ENCODE measurements at regions of chr1 and their contacts with region 1.

Region 1: DNA sequence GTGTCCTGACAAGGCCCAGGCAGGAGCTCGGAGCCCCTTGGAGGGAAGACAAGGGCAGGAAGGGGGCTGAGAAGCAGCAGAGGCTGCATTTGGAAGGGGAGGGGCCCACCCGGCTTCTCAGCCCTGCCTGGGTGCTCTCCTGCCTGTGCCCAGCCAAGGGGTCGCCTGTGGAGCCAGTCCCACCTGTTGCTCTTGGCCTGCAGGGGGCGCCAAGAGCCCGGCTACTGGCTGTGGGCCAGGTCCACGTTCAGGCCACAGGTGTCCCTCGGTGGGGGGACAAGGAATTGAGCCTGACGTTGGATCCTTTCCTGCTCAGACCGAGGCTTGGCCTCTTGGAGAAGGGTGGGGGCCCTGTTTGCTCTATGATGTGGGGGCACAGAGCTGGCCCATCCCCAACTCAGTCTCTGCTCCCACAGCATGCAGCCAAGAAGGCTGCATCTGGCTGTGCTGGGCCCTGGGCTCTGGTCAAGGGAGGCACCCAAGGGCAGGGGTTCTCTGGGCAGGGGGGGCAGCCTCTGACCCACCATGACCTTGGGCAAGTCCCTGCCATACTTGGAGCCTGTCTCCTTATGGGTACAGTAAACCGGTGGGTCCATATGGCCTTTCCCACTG is 10.9 kb downstream of the WNT4 start:
- DNase-seq: no peak
- ATAC-seq: peak in 2 of 4 donors; percentile 34 to 53
- H3K4me3 ChIP-seq: no peak overlapping the region
- H3K27ac ChIP-seq: no peak overlapping the region
- H3K4me1 ChIP-seq: peaks cover 0 to 4% (median 0%) of the 10 kb centered on the region in 12 donors
- H3K27me3 ChIP-seq: peaks cover 0 to 33% (median 1%) of the 10 kb centered on the region in 9 donors
- CTCF ChIP-seq: peak; percentile 35 to 69 (median 62)
- POLR2A ChIP-seq: no peak

Region 2: DNA sequence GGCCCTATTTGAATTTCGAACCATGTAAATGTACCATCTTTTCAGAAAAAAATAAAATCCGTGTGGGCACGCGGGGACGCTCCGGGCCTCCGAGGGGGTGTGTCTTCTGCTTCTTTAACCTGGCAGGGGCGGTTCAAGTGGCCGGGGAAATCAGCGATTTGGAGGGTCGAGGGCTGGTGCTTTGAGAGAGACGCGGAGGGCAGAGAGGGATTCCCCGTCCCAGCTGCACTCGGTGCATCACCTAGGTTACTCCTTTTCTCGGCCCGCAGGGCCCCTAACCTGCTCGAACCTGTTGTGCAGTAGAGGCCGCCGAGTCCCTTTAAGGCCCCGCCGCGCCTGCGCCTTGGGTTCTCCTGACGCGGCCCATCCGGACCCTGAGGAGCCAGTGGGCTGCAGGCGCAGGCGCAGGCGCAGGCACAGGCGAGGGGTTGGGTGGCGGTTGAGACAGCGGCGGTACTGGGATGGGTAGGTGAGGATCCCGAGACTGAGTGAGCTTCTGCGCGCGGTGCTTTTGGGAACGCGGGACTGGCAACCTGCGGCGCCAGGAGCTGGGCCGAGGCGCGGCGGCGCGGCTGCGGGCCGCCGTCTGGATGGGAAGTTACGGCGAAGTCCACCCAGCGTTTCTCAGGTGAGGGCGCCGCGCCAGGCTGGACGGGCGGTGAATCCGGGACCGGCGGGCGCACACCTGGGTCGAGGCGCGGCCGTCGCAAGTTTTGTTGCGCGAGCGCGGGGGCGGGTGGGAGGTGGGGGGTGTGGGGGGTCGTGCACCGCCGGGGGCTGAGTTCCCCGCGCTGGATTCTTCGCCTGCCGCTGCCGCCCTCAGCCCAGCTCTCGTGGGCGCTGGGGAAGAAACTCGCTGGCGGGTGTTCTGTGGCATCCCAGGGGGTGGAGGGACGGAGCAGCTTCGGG is 692.0 kb before region 1 on chr1 and contains the start of gene NBPF3:
- intact Hi-C with region 1: no loop called
- DNase-seq: peak; percentile 82 to 92 (median 88)
- ATAC-seq: peak; percentile 94 to 99 (median 98)
- H3K4me3 ChIP-seq: peak within 1 kb of the TSS; percentile 39 to 94 (median 78)
- H3K27ac ChIP-seq: peak within 1 kb of the TSS in 8 of 12 donors; percentile 31 to 84 (median 56)
- H3K4me1 ChIP-seq: peaks cover 0 to 19% (median 8%) of the 10 kb centered on the region in 12 donors
- H3K27me3 ChIP-seq: peaks cover 0 to 7% (median 0%) of the 10 kb centered on the region in 9 donors
- CTCF ChIP-seq: no peak
- POLR2A ChIP-seq: peak in 1 of 2 donors; percentile 65
- total RNA-seq, gene NBPF3: 1.6 to 7.3 (median 4.1) TPM

Region 3: GRCh38 chr1:21937372-21938221 is 194.4 kb before region 1 on chr1:
- intact Hi-C with region 1: no loop called
- DNase-seq: peak; percentile 87 to 94 (median 90)
- ATAC-seq: peak; percentile 23 to 81 (median 66)
- H3K4me3 ChIP-seq: peak overlapping the region; percentile 14 to 98 (median 50)
- H3K27ac ChIP-seq: peak overlapping the region; percentile 57 to 91 (median 88)
- H3K4me1 ChIP-seq: peaks cover 20 to 86% (median 62%) of the 10 kb centered on the region in 12 donors
- H3K27me3 ChIP-seq: no peaks in the 10 kb centered on the region
- CTCF ChIP-seq: no peak
- POLR2A ChIP-seq: peak in 1 of 2 donors; percentile 69

Region 4: DNA sequence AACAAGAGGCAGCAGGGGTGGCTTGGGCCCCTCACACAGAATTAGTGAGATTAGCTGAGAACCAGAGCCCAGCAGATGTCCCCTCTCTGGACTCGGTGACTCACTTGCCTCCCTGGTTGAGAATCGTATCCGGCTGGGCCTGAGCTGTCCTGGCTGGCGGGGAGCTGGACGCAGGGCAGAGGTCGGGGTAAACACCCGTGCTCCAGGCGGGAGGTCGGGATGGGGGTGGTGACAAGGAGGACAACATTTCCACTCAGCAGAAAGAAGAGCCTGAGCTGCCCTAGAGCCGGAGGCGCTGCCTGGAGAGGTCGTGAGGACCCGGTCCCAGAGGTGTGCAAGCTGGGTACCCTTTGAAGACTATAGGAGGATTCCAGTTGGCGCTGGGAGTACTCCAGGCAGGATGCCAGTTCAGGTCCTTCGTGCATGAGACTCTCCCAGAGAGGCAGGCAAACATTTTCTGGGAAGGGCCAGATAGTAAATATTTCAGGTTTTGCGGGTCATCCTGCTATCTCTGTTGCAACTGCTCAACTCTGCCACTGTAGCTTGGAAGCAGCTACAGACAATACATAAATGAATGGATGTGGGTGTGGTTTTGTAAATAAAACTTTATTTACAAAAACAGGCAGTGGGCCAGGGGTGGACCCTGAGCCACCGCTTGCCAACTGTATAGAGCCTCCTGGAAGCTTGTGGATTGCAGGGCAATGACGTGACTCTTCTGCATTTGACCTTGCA is 127.7 kb after region 1 on chr1:
- intact Hi-C with region 1: loop called in 1 of 10 experiments (anchors 10 kb)
- DNase-seq: no peak
- ATAC-seq: no peak
- H3K4me3 ChIP-seq: no peak overlapping the region
- H3K27ac ChIP-seq: no peak overlapping the region
- H3K4me1 ChIP-seq: no peaks in the 10 kb centered on the region
- H3K27me3 ChIP-seq: peaks cover 0 to 73% (median 14%) of the 10 kb centered on the region in 9 donors
- CTCF ChIP-seq: no peak
- POLR2A ChIP-seq: no peak

Region 5: DNA sequence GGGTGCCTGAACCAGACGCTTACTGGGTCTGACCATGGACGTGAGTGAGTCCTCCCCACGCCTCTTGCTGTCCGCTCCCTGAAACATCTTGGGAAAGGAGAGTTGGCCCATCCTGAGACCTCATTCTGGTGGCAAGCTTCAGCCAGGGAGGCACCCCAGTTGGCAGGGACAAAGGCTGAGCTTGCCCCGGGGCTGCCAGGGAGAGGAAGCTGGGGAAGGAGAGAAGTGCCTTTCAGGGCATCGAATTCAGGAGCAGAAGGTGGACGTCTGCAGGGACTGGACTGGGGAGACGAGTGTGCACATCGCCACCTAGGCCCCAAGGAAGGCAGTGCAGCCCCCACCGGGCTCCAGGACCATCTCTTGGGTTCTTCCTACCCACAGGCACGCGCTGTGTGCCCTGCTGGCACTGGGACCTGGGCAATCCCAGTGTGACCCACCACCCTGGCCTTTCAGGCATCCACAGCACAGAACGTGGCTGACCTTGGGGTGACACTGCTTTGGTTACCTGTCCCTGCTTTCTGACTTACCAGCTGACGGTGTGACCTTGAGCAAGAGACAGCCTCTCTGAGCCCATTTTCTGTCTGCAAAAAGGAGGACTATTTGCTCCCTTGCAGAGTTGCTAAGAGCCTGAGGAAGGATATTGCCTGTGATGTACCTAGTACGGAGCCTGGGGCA is 143.9 kb after region 1 on chr1:
- intact Hi-C with region 1: loop called in 4 of 10 experiments (anchors 10 kb)
- DNase-seq: peak in 1 of 5 donors; percentile 16
- ATAC-seq: peak in 3 of 4 donors; percentile 44 to 76 (median 72)
- H3K4me3 ChIP-seq: no peak overlapping the region
- H3K27ac ChIP-seq: no peak overlapping the region
- H3K4me1 ChIP-seq: no peaks in the 10 kb centered on the region
- H3K27me3 ChIP-seq: peaks cover 0 to 50% (median 0%) of the 10 kb centered on the region in 9 donors
- CTCF ChIP-seq: peak; percentile 50 to 74 (median 68)
- POLR2A ChIP-seq: no peak

Region 6: DNA sequence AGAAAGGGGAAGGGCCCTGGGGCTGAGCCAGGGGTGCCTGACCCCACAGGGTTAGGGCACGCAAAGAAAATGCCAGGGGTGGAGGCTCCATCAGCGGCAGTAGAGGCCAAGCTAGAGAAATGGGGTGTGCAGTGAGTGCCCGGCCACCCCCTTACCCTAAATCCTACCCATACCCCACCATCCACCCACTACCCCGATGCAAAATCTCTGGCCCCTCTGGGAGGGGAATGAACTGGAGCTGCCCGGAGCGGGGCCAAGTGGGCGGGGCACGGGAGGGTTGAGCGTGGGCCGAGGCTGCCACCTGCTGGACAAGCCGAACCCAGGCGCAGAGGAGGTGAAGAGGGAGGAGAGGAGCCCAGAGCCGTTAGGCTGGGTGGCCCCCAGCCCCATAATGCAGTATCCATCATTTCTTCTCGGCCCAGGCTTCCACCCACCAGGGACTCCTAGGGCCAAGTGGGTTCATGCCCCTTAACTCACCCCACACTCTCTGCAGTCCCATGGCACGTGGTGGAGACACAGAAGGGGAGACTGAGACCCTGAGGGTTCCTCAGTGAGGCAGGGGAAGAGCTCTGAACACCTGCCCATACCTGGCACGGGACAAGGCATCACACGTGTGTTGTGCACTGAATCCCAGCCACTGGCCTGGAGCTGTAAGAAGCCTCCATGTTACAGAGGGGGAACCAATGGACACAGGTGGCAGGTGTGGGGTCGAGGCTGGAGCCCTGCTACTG is 510.1 kb after region 1 on chr1:
- intact Hi-C with region 1: loop called in 3 of 10 experiments (anchors 10 kb)
- DNase-seq: peak; percentile 77 to 93 (median 85)
- ATAC-seq: peak; percentile 59 to 88 (median 81)
- H3K4me3 ChIP-seq: no peak overlapping the region
- H3K27ac ChIP-seq: peak overlapping the region in 2 of 12 donors; percentile 9 to 75
- H3K4me1 ChIP-seq: peaks cover 0 to 20% (median 0%) of the 10 kb centered on the region in 12 donors
- H3K27me3 ChIP-seq: peaks cover 0 to 26% (median 0%) of the 10 kb centered on the region in 9 donors
- CTCF ChIP-seq: peak; percentile 79 to 96 (median 90)
- POLR2A ChIP-seq: no peak

Region 7: DNA sequence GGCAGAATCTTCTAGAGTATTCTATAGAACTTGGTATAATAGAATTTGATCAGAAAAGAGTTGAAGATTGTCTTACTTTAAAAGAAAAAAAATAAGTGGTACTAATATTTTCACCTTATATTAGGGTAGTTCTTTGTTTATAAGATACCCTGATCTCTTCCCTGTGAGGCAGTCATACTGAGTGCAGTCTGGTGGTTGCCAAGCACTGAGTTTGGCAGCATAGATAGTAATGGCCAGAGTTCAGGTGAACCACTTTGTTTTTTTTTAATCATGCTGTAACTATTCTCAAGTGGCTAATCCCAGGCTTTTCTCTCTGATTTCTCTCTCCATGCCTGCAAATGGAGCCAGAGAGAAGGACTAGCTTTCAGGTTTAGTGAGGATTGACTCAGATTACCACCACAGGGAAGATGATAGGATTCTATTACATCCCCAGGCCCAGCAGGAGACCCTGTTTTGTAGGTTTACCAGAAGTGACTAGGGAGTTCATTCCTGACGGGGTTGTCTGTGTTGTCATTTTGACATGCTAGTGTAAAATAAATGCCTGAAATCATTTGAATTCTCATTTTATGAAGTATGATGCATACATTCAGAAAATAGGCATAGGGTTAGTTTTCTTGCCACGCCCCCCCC is 904.0 kb after region 1 on chr1:
- intact Hi-C with region 1: no loop called
- DNase-seq: no peak
- ATAC-seq: no peak
- H3K4me3 ChIP-seq: no peak overlapping the region
- H3K27ac ChIP-seq: no peak overlapping the region
- H3K4me1 ChIP-seq: peaks cover 0 to 10% (median 0%) of the 10 kb centered on the region in 12 donors
- H3K27me3 ChIP-seq: no peaks in the 10 kb centered on the region
- CTCF ChIP-seq: no peak
- POLR2A ChIP-seq: no peak